ENCODE measurements at regions of chr1 and their contacts with region 1.

Region 1: DNA sequence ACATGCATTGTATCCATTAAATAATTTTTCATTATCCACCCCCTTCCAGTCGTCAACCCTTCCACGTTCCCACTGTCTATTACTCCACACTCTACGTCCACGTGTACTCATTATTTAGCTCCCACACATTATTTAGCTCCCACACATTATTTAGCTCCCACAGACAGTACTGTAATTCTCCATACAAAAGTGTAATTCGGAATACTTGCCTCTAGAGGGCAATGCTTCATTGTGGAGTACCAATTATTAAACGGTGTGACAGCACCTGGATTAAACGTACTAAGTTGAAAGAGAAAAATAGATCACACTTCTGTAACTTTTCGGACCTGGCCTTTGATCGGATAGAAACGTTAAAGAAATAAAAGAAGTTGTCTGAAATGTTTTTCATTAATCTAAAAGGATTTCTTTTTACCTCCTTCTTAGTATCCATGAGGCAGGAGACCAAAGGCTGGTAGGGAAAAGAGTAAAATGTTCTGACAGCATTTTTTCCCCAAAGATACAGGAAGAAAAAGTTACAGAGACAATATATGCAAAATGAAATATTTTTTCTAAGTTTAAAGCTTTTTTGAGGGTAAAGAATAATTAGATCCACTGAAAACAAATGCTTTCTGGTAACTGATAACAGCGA is 99.2 kb downstream of the LHX8 start:
- DNase-seq: peak; percentile 66
- H3K4me3 ChIP-seq: no peak overlapping the region
- H3K27ac ChIP-seq: no peak overlapping the region
- H3K4me1 ChIP-seq: peaks cover 11% of the 10 kb centered on the region
- H3K27me3 ChIP-seq: no peaks in the 10 kb centered on the region
- CTCF ChIP-seq: peak; percentile 43 to 52
- POLR2A ChIP-seq: no peak

Region 2: GRCh38 chr1:75208862-75209261 is 24.6 kb before region 1 on chr1:
- CTCF ChIA-PET with region 1: interaction called, 10 read pairs
- POLR2A ChIA-PET with region 1: no interaction called
- dilution Hi-C with region 1: no loop called
- intact Hi-C with region 1: no loop called
- DNase-seq: peak; percentile 77
- H3K4me3 ChIP-seq: no peak overlapping the region
- H3K27ac ChIP-seq: no peak overlapping the region
- H3K4me1 ChIP-seq: peaks cover 4% of the 10 kb centered on the region
- H3K27me3 ChIP-seq: no peaks in the 10 kb centered on the region
- CTCF ChIP-seq: no peak
- POLR2A ChIP-seq: no peak

Region 3: GRCh38 chr1:75615613-75616435 is 382.4 kb after region 1 on chr1:
- CTCF ChIA-PET with region 1: interaction called, 28 read pairs
- POLR2A ChIA-PET with region 1: no interaction called
- dilution Hi-C with region 1: no loop called
- intact Hi-C with region 1: no loop called
- DNase-seq: peak; percentile 74
- H3K4me3 ChIP-seq: peak overlapping the region; percentile 80 to 84 (median 82)
- H3K27ac ChIP-seq: no peak overlapping the region
- H3K4me1 ChIP-seq: peaks cover 12% of the 10 kb centered on the region
- H3K27me3 ChIP-seq: peaks cover 0 to 3% of the 10 kb centered on the region in 2 experiments
- CTCF ChIP-seq: no peak
- POLR2A ChIP-seq: no peak

Region 4: DNA sequence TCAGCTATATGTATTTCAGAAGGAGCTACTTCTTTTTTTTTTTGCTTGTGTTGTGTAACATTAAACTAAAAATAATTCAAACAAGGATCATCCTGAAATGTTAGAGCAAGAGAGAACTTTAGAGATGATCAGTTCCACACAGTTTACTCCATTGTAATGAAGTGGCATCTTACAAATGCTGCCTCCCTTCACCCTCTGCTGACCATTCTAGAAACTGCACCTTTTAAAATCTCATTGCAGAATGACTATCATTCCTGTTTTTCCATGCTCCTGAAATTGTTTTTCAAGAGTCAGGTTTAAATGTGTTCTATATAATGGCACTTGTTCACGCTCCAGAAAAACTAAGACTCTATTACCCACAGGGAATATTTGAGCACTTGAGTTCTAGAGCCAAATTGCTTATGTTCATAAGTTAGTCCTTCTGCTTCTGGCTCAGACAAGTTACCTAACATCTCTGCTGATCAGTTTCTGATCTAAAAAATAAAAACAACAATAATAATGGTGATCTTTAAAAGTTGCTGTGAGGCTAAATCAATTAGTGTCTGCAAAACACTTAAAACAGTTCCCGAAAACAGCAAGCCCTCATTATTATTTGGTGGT is 399.0 kb after region 1 on chr1:
- CTCF ChIA-PET with region 1: interaction called, 29 read pairs
- POLR2A ChIA-PET with region 1: no interaction called
- dilution Hi-C with region 1: no loop called
- intact Hi-C with region 1: loop called (anchors 1 kb)
- DNase-seq: peak; percentile 70
- H3K4me3 ChIP-seq: no peak overlapping the region
- H3K27ac ChIP-seq: no peak overlapping the region
- H3K4me1 ChIP-seq: no peaks in the 10 kb centered on the region
- H3K27me3 ChIP-seq: no peaks in the 10 kb centered on the region
- CTCF ChIP-seq: peak; percentile 64 to 70
- POLR2A ChIP-seq: no peak

Region 5: GRCh38 chr1:75712306-75712705 is 478.9 kb after region 1 on chr1:
- CTCF ChIA-PET with region 1: no interaction called
- POLR2A ChIA-PET with region 1: no interaction called
- dilution Hi-C with region 1: no loop called
- intact Hi-C with region 1: no loop called
- DNase-seq: no peak
- H3K4me3 ChIP-seq: no peak overlapping the region
- H3K27ac ChIP-seq: no peak overlapping the region
- H3K4me1 ChIP-seq: no peaks in the 10 kb centered on the region
- H3K27me3 ChIP-seq: peaks cover 0 to 2% of the 10 kb centered on the region in 2 experiments
- CTCF ChIP-seq: no peak
- POLR2A ChIP-seq: no peak

Region 6: GRCh38 chr1:75724472-75725022 is 491.1 kb after region 1 on chr1 and contains the start of gene ACADM:
- CTCF ChIA-PET with region 1: interaction called, 3 read pairs
- POLR2A ChIA-PET with region 1: no interaction called
- dilution Hi-C with region 1: no loop called
- intact Hi-C with region 1: loop called (anchors 5 kb)
- DNase-seq: peak; percentile 85
- H3K4me3 ChIP-seq: peak within 1 kb of the TSS; percentile 73 to 99 (median 98)
- H3K27ac ChIP-seq: peak within 1 kb of the TSS; percentile 79
- H3K4me1 ChIP-seq: peaks cover 15% of the 10 kb centered on the region
- H3K27me3 ChIP-seq: no peaks in the 10 kb centered on the region
- CTCF ChIP-seq: no peak
- POLR2A ChIP-seq: peak; percentile 60
- total RNA-seq, gene ACADM: 32.5 and 40.4 TPM in 2 replicates

Region 7: DNA sequence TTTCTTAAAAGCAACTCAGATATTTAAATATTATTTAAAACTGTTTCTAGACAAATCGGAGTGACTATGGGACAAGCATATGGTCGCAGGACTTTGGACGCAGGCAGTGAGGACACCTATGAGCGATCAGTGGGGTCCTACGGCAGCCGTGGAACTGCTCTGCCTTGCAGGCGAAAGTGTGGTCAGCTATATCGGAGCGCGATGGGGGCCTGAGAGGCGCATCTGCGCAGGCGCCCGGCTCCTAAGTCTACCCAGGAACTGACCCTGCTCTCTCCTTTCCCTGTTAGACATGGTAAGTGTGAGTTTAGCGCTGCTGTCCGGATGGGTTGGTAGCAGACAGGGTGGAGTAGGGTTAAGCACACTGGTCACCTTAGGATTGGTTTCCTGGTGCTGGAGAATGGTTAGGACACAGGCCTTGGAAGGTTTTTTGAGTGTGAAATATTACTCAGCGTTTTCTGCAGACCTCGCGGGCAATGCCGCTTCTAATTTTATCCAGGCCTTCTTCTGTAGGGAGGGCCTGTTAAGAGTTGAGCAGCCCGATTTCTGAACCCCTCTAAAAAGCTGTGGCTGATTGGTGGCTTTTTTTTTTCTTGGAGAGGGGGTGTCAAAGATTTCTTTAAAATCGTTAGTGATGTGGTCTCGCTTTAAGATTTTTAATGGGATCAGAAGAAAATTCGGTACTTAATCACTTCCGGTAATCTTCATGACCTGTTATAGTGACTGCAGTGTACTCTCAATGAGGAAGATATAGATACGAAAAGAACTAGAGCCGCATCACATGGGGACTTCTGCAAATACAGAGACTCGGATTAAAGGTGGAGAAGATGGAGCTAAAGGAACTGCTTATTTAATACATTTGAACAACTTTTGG is 552.8 kb after region 1 on chr1 and contains the start of gene RABGGTB:
- CTCF ChIA-PET with region 1: interaction called, 7 read pairs
- POLR2A ChIA-PET with region 1: no interaction called
- dilution Hi-C with region 1: no loop called
- intact Hi-C with region 1: loop called (anchors 2 kb)
- DNase-seq: peak; percentile 99
- H3K4me3 ChIP-seq: peak within 1 kb of the TSS; percentile 62 to 99 (median 96)
- H3K27ac ChIP-seq: peak within 1 kb of the TSS; percentile 83
- H3K4me1 ChIP-seq: peaks cover 33% of the 10 kb centered on the region
- H3K27me3 ChIP-seq: no peaks in the 10 kb centered on the region
- CTCF ChIP-seq: no peak
- POLR2A ChIP-seq: peak; percentile 100
- total RNA-seq, gene RABGGTB: 103 and 114 TPM in 2 replicates